ENCODE measurements at regions of chr2 and their contacts with region 1.

Region 1: GRCh38 chr2:177806025-177806424 is 266.6 kb downstream of the PDE11A start:
- DNase-seq: no peak
- ATAC-seq: no peak
- H3K4me3 ChIP-seq: no peak overlapping the region
- H3K27ac ChIP-seq: no peak overlapping the region
- H3K4me1 ChIP-seq: no peaks in the 10 kb centered on the region
- H3K27me3 ChIP-seq: no peaks in the 10 kb centered on the region
- CTCF ChIP-seq: no peak

Region 2: GRCh38 chr2:177783835-177784744 is 21.9 kb before region 1 on chr2:
- intact Hi-C with region 1: no loop called
- DNase-seq: no peak
- ATAC-seq: peak; percentile 35 to 78 (median 62)
- H3K4me3 ChIP-seq: peak overlapping the region in 1 of 10 donors; percentile 14
- H3K27ac ChIP-seq: peak overlapping the region in 9 of 10 donors; percentile 17 to 73 (median 44)
- H3K4me1 ChIP-seq: peaks cover 0 to 21% (median 9%) of the 10 kb centered on the region in 9 donors
- H3K27me3 ChIP-seq: no peaks in the 10 kb centered on the region
- CTCF ChIP-seq: no peak

Region 3: DNA sequence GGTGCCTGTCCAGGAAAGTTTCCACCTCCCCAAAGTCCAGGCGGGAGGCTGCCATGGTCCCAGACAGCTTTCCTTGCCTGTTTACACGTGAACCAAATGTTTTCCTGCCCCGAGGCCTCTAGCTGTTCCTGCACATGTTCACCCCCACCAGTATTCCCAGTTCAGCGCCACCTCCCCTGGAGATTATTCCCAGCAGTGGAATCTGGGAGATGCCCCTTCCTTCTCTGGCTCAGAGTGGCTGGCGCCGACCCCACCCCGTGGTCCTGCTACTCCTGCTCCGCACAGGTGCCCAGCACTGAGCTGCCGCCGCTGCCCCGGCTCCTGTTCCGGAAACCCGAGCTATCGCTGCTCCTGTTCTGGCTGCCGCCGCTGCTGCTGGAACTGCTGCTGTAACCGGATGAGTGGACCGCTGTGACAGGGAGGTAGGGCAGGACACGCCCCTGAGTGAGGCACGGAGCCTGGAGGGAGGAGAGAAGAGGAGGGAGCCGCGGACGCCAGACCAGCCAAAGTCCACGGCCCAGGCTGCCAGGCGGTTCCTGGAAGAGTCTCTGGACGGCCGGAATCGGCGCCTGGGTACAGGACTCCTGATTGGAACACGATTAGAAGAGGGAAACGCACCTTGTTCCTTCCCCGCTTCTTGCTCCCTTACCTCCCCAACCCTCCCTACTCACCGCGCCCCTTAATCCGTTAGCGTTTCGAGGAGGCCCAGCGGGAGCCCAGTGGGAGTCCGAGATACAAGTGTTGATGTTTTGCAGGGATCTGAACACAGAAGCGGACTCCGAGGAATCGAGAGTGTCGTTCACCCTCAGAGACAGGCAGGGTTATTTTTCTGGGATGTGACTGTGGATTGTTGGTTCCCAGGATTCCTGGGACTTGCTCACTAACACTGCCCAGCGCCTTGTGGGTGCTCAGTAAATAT is 266.6 kb after region 1 on chr2 and contains the start of gene PDE11A:
- intact Hi-C with region 1: loop called in 1 of 10 experiments (anchors 10 kb)
- DNase-seq: peak; percentile 56 to 75
- ATAC-seq: peak; percentile 89 to 98 (median 95)
- H3K4me3 ChIP-seq: peak within 1 kb of the TSS; percentile 5 to 57 (median 48)
- H3K27ac ChIP-seq: peak within 1 kb of the TSS in 5 of 10 donors; percentile 13 to 66 (median 48)
- H3K4me1 ChIP-seq: peaks cover 0 to 16% (median 9%) of the 10 kb centered on the region in 9 donors
- H3K27me3 ChIP-seq: peaks cover 0 to 41% (median 13%) of the 10 kb centered on the region in 7 donors
- CTCF ChIP-seq: no peak
- total RNA-seq, gene PDE11A: 0.57 to 6.4 (median 1.1) TPM